ENCODE measurements at regions of chr19 and their contacts with region 1.

Region 1: GRCh38 chr19:13732337-13732736 is 32.0 kb upstream of the MRI1 start:
- DNase-seq: no peak
- ATAC-seq: no peak
- H3K4me3 ChIP-seq: peak overlapping the region; percentile 74
- H3K27ac ChIP-seq: no peak overlapping the region
- H3K4me1 ChIP-seq: peaks cover 24% of the 10 kb centered on the region
- H3K27me3 ChIP-seq: no peaks in the 10 kb centered on the region
- CTCF ChIP-seq: no peak

Region 2: DNA sequence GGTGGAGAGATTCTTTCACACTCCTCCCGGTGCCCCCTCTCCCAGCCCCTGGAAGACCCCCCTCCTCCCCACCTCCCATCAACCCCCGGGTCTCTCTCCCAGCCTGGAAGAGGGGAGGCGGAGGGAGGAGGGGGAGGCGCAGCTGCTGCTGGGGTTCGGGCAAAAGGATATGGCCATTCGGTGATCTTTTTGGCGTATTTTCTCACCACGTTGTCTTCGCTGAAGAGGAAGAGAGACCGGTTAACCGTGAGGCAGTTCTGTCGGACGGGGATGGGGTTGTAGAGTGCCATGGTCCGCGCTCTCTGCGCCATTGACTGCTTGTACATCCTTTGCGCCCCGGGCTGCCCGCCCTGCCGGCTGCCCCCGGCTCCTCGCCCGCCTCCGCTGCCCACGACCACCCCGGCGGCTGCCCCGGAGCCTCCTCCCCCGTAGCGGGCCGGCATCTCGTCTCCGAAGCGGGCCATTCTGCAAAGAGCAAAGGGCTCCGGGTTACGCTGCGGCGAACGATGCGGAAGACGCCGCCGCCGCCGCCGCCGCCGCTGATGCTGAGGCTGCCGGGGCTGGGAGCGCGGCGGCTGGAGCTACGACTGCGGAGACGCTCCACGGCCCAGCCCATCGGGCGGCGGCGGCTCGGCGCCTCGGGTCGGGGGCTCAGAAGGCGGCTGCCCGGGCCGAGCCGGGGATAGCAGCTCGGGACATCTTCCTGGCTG is 226.4 kb before region 1 on chr19:
- CTCF ChIA-PET with region 1: no interaction called
- POLR2A ChIA-PET with region 1: no interaction called
- intact Hi-C with region 1: no loop called
- DNase-seq: no peak
- ATAC-seq: no peak
- H3K4me3 ChIP-seq: no peak overlapping the region
- H3K27ac ChIP-seq: no peak overlapping the region
- H3K4me1 ChIP-seq: no peaks in the 10 kb centered on the region
- H3K27me3 ChIP-seq: peaks cover 91% of the 10 kb centered on the region
- CTCF ChIP-seq: no peak

Region 3: GRCh38 chr19:13597640-13598039 is 134.7 kb before region 1 on chr19:
- CTCF ChIA-PET with region 1: no interaction called
- POLR2A ChIA-PET with region 1: interaction called, 10 read pairs
- intact Hi-C with region 1: no loop called
- DNase-seq: peak; percentile 83
- ATAC-seq: peak; percentile 94
- H3K4me3 ChIP-seq: no peak overlapping the region
- H3K27ac ChIP-seq: no peak overlapping the region
- H3K4me1 ChIP-seq: peaks cover 5% of the 10 kb centered on the region; the same call in 1 of the 2 replicates
- H3K27me3 ChIP-seq: no peaks in the 10 kb centered on the region
- CTCF ChIP-seq: peak; percentile 88

Region 4: DNA sequence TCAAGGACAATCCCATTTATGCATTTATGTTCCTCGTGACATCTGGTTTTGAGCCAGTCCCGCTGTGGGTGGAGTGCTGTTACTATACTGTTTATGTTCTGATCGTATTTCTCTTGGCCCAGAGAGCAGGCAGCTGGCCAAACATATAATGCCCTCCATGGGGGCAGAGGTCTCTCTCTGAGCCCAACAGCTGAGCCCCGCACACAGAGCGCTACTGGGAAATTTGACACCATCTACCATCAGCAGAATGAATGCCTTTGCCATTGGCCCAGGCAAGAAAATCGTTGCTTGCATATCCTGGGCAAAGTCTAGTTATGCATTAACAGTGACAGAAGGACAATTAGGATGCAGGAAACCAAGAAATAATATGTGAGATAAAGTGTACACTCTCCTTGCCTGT is 99.2 kb before region 1 on chr19:
- CTCF ChIA-PET with region 1: no interaction called
- POLR2A ChIA-PET with region 1: no interaction called
- intact Hi-C with region 1: no loop called
- DNase-seq: peak; percentile 58
- ATAC-seq: peak; percentile 35
- H3K4me3 ChIP-seq: no peak overlapping the region; the same call in 1 of the 2 replicates
- H3K27ac ChIP-seq: no peak overlapping the region
- H3K4me1 ChIP-seq: peaks cover 29% of the 10 kb centered on the region
- H3K27me3 ChIP-seq: no peaks in the 10 kb centered on the region
- CTCF ChIP-seq: no peak

Measured in PC-3 (cell line).